ENCODE measurements at regions of chr3 and their contacts with region 1.

Region 1: GRCh38 chr3:197504239-197505121 is 51.3 kb downstream of the BDH1 start:
- DNase-seq: no peak
- H3K4me3 ChIP-seq: no peak overlapping the region
- H3K27ac ChIP-seq: no peak overlapping the region
- H3K4me1 ChIP-seq: peaks cover 2% of the 10 kb centered on the region
- H3K27me3 ChIP-seq: peaks cover 6% of the 10 kb centered on the region
- CTCF ChIP-seq: no peak

Region 2: GRCh38 chr3:197256836-197257444 is 247.5 kb before region 1 on chr3:
- intact Hi-C with region 1: loop called (anchors 5 kb)
- DNase-seq: no peak
- H3K4me3 ChIP-seq: no peak overlapping the region
- H3K27ac ChIP-seq: no peak overlapping the region
- H3K4me1 ChIP-seq: peaks cover 54% of the 10 kb centered on the region
- H3K27me3 ChIP-seq: no peaks in the 10 kb centered on the region
- CTCF ChIP-seq: peak; percentile 82

Region 3: GRCh38 chr3:197367081-197367780 is 137.2 kb before region 1 on chr3:
- intact Hi-C with region 1: no loop called
- DNase-seq: no peak
- H3K4me3 ChIP-seq: no peak overlapping the region
- H3K27ac ChIP-seq: no peak overlapping the region
- H3K4me1 ChIP-seq: peaks cover 3% of the 10 kb centered on the region
- H3K27me3 ChIP-seq: no peaks in the 10 kb centered on the region
- CTCF ChIP-seq: no peak